ENCODE measurements at regions of chr4 and their contacts with region 1.

Region 1: DNA sequence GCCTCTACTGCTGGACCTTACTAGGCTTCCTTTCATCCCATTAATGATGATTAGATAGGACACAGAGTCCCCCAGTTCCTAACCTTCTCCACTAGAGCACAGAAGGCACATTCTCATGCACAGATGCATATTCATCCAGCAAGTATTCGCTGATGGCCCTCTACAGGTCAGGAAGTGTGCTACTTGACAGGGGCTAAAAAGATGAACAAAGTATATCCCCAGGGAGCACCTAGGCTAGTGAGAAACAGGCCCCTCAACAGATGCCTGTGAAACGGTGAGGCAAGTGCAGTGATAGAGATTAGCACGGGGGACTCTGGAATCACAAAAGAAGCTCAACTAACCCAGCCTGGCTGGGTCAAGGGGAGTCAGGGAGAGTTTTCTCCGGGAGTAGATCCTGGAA is 95.8 kb downstream of the MGST2 start:
- DNase-seq: no peak
- ATAC-seq: no peak
- H3K4me3 ChIP-seq: no peak overlapping the region
- H3K4me3 Mint-ChIP-seq: no peak overlapping the region
- H3K27ac ChIP-seq: no peak overlapping the region
- H3K27ac Mint-ChIP-seq: no peak overlapping the region
- H3K4me1 ChIP-seq: no peaks in the 10 kb centered on the region
- H3K4me1 Mint-ChIP-seq: no peaks in the 10 kb centered on the region
- H3K27me3 ChIP-seq: no peaks in the 10 kb centered on the region
- H3K27me3 Mint-ChIP-seq: no peaks in the 10 kb centered on the region
- CTCF ChIP-seq: no peak

Region 2: DNA sequence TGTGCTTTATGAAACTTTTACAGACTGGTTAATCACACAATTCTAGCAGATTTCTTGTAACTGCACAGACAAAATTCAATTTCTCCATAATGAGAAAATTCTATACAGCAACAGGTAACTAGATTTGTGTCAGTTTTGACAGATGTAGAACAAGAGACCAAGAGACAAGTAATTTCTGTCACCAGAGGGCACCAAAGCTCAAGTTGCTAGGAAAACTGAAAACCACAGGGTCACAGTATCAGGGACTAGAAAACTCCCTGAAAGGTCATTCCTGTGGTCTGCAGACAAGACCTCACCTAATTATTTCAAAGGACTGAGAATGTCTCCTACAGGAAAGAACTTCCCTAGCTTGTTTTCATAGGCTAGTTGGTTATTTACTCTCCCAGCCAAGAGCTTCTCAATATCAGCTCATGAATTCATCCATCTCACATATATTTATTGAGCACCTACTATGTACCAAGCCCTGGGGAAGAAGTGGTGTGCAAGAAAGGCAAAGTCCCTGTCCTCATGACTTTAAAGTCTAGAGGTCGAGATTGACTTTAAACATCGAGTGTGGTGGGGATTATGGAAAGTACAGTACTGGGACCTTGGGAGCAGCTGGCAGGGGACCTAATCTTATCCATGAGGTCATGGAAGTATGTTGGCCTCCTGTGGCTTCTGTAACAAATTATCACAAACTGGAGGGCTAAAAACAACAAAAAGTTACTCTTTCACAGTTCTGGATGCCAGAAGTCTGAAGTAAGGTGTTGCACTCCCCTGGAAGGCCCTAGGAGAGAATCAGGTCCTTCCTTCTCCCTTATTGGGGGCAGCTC is 157.7 kb before region 1 on chr4:
- CTCF ChIA-PET with region 1: no interaction called
- POLR2A ChIA-PET with region 1: no interaction called
- intact Hi-C with region 1: loop called in 1 of 2 experiments (anchors 10 kb)
- DNase-seq: peak in 7 of 14 experiments; percentile 5 to 71 (median 48)
- ATAC-seq: no peak
- H3K4me3 ChIP-seq: no peak overlapping the region
- H3K4me3 Mint-ChIP-seq: no peak overlapping the region
- H3K27ac ChIP-seq: no peak overlapping the region
- H3K27ac Mint-ChIP-seq: no peak overlapping the region
- H3K4me1 ChIP-seq: peaks cover 12% of the 10 kb centered on the region
- H3K4me1 Mint-ChIP-seq: peaks cover 15% of the 10 kb centered on the region
- H3K27me3 ChIP-seq: no peaks in the 10 kb centered on the region
- H3K27me3 Mint-ChIP-seq: peaks cover 11% of the 10 kb centered on the region
- CTCF ChIP-seq: peak; percentile 62

Region 3: GRCh38 chr4:139746431-139747171 is 14.9 kb before region 1 on chr4:
- CTCF ChIA-PET with region 1: no interaction called
- POLR2A ChIA-PET with region 1: no interaction called
- intact Hi-C with region 1: no loop called
- DNase-seq: no peak
- ATAC-seq: no peak
- H3K4me3 ChIP-seq: no peak overlapping the region
- H3K4me3 Mint-ChIP-seq: no peak overlapping the region
- H3K27ac ChIP-seq: no peak overlapping the region
- H3K27ac Mint-ChIP-seq: no peak overlapping the region
- H3K4me1 ChIP-seq: no peaks in the 10 kb centered on the region
- H3K4me1 Mint-ChIP-seq: no peaks in the 10 kb centered on the region
- H3K27me3 ChIP-seq: no peaks in the 10 kb centered on the region
- H3K27me3 Mint-ChIP-seq: no peaks in the 10 kb centered on the region
- CTCF ChIP-seq: no peak

Measured in CD4-positive, alpha-beta T cell (primary cell).